Activated T-helper 1 cell treated with anti-CD3 and anti-CD28 coated beads, Interleukin-12 subunit alpha, Interleukin-12 subunit beta, Interleukin-2, Interleukin-4 antibody, amounts not matched to agents 30 ng/mL and 10 ng/mL and 1 ng/mL, durations not matched to agents 14 hours and 24 hours and 36 hours (primary cell): ENCODE measurements at regions of chr17 and their contacts with region 1.

Region 1: DNA sequence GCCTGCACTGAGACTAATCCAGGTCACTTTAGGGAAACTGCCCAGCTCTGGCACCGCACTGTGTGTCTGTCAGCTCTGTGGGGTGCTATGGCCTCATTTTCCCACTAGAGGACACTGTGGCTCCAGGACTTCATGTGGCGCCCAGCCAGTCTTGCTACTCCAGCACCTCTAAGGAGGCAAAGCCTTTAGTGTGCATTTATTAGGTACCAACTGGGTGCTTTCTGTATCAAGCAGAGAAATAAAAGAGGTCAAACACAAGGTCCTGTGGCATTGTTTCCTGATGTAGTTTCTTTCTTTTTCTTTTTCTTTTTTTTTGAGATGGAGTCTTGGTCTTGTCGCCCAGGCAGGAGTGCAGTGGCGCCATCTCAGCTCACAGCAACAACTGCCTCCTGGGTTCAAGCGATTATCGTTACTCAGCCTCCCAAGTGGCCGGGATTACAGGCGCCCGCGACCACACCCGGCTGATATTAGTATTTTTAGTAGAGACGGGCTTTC is 12.5 kb upstream of the RHBDL3 start:
- DNase-seq: peak; percentile 67
- H3K4me3 Mint-ChIP-seq: no peak overlapping the region
- H3K27ac Mint-ChIP-seq: no peak overlapping the region
- H3K4me1 Mint-ChIP-seq: no peaks in the 10 kb centered on the region
- H3K27me3 Mint-ChIP-seq: peaks cover 21% of the 10 kb centered on the region

Region 2: GRCh38 chr17:32319548-32319905 is 66.4 kb after region 1 on chr17:
- intact Hi-C with region 1: loop called (anchors 1 kb)
- DNase-seq: peak; percentile 69
- H3K4me3 Mint-ChIP-seq: peak overlapping the region; percentile 83
- H3K27ac Mint-ChIP-seq: peak overlapping the region; percentile 18
- H3K4me1 Mint-ChIP-seq: peaks cover 24% of the 10 kb centered on the region
- H3K27me3 Mint-ChIP-seq: peaks cover 13% of the 10 kb centered on the region

Region 3: GRCh38 chr17:32444308-32445073 is 191.3 kb after region 1 on chr17 and contains the start of gene PSMD11:
- intact Hi-C with region 1: loop called (anchors 1 kb)
- DNase-seq: peak; percentile 98
- H3K4me3 Mint-ChIP-seq: peak within 1 kb of the TSS; percentile 94
- H3K27ac Mint-ChIP-seq: peak within 1 kb of the TSS; percentile 88
- H3K4me1 Mint-ChIP-seq: peaks cover 28% of the 10 kb centered on the region
- H3K27me3 Mint-ChIP-seq: peaks cover 5% of the 10 kb centered on the region
- total RNA-seq, gene PSMD11: 190 and 198 TPM in 2 replicates

Region 4: DNA sequence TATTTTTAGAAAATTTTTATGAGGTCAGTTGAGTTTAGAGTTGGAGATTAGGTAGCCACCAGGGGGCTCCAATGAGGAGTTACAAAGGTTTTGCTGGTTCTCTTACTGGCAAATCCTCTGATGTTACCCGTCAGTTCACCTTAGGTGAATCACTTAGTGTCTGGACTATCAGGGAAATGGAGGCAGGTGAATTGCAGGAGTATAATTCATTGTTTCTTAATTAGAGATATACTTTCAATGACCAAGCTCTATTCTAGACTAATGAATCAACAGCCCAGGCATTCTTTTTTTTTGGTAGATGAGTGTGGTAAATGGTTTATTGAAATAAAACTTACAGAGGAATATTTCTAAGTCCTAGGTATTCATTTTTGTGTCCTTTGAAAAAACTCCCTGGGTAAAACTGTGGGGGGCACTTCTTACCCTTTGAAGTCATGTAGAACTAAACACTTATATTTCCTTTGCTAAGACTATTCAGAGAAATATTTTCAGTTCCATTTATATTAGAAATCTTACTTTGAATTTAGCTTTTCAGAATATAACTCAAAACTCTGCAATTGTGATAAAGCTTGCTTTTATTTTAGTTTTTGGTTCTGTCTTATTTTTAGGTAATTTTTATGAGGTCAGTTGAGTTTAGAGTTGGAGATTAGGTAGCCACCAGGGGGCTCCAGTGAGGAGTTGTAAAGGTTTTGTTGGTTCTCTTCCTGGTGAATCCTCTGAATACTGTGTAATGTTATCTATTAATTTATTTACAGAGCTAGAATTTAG is 208.9 kb after region 1 on chr17:
- intact Hi-C with region 1: loop called (anchors 2 kb)
- DNase-seq: peak; percentile 45
- H3K4me3 Mint-ChIP-seq: no peak overlapping the region
- H3K27ac Mint-ChIP-seq: no peak overlapping the region
- H3K4me1 Mint-ChIP-seq: peaks cover 27% of the 10 kb centered on the region
- H3K27me3 Mint-ChIP-seq: no peaks in the 10 kb centered on the region

Region 5: GRCh38 chr17:32755045-32755805 is 502.1 kb after region 1 on chr17:
- intact Hi-C with region 1: loop called (anchors 1 kb)
- DNase-seq: no peak
- H3K4me3 Mint-ChIP-seq: no peak overlapping the region
- H3K27ac Mint-ChIP-seq: no peak overlapping the region
- H3K4me1 Mint-ChIP-seq: peaks cover 5% of the 10 kb centered on the region
- H3K27me3 Mint-ChIP-seq: peaks cover 3% of the 10 kb centered on the region